ENCODE measurements at regions of chr2 and their contacts with region 1.

Region 1: DNA sequence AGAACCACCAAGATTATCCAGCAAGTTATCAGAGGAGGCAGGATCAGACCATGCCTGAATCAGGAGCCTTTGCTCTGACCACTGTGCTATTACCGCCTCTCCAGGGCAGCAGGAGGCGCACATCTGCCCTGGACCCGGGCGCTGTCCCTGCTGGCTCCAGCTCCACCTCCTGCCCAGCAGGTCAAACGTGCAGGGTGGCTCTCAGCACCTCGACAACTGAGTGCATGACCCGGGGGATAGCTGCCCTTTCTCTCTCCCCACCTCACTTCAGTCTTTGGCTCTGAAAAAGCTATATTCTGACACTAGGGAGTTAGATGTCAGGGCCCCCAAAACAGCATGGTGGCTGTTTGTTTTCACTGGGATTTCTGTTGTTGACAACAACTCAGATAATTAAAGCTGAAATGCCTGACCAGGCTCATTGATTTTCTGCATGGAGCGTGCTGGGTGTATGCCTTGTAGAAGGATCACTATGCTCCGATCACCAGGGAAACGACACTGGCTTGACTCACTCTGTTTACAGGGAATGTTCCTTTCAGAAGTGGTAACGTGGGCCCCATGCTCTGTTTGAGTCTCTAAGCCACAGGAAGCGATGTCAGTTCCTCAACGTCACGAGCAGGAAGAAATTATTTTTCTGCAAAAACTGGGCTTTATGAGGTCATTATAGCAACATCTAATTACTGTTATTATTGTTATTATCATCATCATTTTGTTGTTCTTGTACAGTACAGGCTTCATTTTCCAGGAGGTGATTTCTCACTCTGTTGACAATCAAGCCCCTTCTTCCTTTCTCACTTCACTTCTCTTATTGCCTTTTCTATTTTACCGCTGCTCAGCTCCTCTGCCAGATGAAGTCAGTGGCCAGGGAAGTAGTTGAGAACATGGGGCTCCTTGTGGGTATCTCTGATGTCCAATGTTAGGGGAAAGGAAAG is 125.6 kb downstream of the PLB1 start:
- DNase-seq: peak; percentile 84
- H3K4me3 ChIP-seq: no peak overlapping the region
- H3K27ac ChIP-seq: peak overlapping the region; percentile 85
- H3K4me1 ChIP-seq: peaks cover 26% of the 10 kb centered on the region
- H3K27me3 ChIP-seq: no peaks in the 10 kb centered on the region
- CTCF ChIP-seq: peak; percentile 33

Region 2: DNA sequence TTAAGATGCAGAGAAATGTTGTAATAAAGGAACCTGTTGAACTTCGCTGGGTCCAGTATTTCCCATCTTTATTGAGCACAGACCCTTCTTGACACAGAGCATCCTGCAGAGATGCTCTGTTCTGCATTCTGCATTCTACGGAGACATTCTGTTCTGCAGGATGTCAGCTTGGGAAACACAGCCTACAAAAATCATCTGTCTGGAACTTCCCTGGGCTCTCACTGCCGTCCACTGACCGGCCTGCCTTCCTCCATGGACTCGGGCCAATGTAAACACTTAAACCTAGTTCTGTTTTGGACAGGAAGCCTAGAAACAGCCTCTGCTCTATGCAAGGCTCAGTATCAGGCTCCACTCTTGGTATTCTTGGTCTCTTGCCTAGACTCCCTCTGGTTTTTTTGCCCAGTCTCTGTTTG is 40.2 kb after region 1 on chr2:
- intact Hi-C with region 1: loop called (anchors 5 kb)
- DNase-seq: peak; percentile 85
- H3K4me3 ChIP-seq: no peak overlapping the region
- H3K27ac ChIP-seq: peak overlapping the region; percentile 58
- H3K4me1 ChIP-seq: peaks cover 13% of the 10 kb centered on the region
- H3K27me3 ChIP-seq: no peaks in the 10 kb centered on the region
- CTCF ChIP-seq: no peak